Colonic mucosa (tissue), 4 donors: ENCODE measurements at regions of chr3 and their contacts with region 1.

Region 1: DNA sequence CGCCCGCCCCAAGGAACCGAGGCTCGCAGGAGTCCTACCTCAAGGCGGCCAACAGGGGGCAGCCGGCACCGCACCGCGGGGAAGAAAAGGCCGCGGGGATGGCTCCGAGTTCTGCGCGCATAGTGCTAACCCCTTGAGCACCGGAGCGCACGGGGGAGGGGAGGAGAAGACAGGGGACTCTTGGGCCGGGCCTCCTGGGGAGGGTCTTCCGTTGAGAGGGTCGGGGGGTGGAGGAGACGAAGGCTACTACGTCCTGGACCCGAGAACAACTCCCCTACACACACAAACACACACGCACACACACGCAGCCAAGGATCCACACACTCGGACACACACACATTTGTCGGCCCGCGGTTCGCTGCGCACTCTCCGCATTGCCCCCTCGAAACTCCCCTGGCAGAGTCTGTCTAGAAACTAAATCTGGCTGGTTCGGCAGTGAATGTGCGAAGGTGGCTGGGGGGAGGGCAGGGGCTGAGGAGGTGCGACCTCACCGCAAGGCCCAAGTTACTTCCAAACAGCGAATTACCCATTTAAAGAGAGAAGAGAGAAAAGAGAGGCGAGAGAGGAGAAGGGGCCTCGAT is 1.8 kb downstream of the WNT5A start:
- DNase-seq: peak; percentile 75
- H3K4me3 ChIP-seq: peak overlapping the region; percentile 57
- H3K27ac ChIP-seq: peak overlapping the region; percentile 23
- H3K4me1 ChIP-seq: peaks cover 10% of the 10 kb centered on the region
- H3K27me3 ChIP-seq: peaks cover 40% of the 10 kb centered on the region
- CTCF ChIP-seq: peak; percentile 70

Region 2: DNA sequence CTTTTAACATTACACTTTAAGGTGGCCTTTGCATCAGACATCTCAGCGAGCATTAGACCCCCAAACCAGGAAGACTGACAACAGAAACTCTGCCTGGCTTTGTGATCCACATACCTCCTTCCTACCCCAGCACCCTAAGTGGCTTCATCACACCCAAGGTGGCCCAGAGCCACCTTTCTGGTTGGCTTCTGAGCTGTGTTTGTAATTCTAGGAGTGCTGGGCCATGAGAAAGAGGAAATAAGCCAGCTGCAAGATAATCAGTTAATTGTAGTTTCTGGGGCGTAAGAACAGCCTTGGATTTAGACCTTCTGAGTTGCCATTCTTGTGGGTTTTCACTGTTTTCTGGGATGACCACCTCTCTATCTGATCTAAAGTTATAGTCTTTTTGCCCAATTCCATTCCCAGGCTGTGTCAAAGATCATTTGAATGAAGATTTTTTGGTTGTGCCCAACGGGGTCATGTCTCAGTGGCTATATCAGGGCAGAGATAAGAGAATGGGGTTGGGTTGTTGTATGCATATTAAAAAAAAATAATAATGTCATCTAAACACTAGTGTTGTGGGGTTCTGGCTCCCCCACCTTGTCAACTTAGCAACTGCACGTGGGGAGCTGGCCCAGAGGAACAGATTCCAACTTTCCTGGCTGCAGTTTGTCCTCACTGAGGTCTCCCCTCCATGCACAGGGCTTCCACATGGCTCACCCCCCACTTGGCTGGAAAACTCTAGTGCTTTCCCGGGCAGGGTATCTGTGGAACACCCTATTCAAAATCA is 236.6 kb after region 1 on chr3:
- intact Hi-C with region 1: loop called (anchors 5 kb)
- DNase-seq: peak; percentile 26
- H3K4me3 ChIP-seq: no peak overlapping the region
- H3K27ac ChIP-seq: no peak overlapping the region
- H3K4me1 ChIP-seq: no peaks in the 10 kb centered on the region
- H3K27me3 ChIP-seq: no peaks in the 10 kb centered on the region
- CTCF ChIP-seq: peak; percentile 41

Region 3: DNA sequence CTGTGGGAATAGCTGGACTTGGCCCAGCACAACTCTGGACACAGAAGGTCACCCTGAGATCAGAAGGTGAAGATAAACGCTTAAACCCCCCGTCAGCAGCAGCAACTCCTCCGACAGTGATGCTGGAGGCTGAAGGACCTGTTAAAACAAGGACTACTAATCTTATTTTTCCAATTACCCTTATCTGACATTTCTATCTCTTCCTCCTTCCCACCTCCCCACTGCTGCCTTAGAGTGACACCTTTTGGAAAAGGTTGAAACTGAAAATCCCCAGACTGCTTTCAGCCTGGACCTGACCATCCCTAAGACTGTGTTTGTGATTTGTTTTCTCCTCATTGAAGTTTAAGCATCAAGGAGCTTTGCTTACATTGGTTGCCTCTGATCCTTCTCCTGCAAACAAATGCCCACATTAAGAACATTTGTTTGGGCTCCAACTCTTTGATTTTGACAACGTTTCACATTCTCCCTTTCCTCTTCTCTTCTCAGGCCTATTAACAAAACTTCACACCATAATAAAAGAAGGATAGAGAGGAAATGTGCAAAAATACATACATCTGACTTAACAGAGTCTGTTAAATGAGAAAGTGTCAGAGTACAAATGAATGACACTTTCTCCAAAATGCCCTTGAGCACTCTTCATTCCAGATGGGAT is 412.4 kb after region 1 on chr3:
- intact Hi-C with region 1: loop called (anchors 5 kb)
- DNase-seq: peak; percentile 19
- H3K4me3 ChIP-seq: no peak overlapping the region
- H3K27ac ChIP-seq: no peak overlapping the region
- H3K4me1 ChIP-seq: no peaks in the 10 kb centered on the region
- H3K27me3 ChIP-seq: no peaks in the 10 kb centered on the region
- CTCF ChIP-seq: peak; percentile 19

Region 4: DNA sequence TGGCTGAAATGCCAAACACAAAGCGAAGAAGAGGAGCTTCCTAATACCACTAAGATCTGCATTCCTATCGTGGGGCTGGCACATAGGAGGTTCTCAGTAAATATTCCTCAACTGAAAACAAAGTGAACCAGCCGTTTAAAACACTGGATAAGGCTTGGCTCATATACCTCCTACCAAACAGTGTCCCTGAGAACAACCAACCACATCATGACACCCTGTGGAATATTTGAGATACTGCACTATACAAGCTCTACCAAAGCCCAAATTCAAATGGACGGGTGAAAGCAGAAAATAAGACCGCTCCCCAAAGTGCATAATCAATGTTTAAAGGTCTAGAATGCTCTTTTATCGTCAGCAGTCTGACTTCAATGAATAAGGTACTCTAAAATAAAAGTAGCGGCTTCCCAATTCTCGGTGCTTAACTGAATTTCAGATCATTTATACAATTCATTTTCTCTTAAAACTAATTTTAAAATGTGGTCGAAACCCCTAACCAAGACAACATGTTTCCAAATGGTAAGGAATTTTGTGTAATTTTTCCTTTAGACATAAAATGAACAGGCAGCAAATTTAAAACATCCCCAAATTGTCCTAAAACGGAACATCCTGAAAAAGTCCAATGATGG is 557.1 kb after region 1 on chr3:
- intact Hi-C with region 1: loop called (anchors 5 kb)
- DNase-seq: no peak
- H3K4me3 ChIP-seq: no peak overlapping the region
- H3K27ac ChIP-seq: no peak overlapping the region
- H3K4me1 ChIP-seq: no peaks in the 10 kb centered on the region
- H3K27me3 ChIP-seq: no peaks in the 10 kb centered on the region
- CTCF ChIP-seq: peak; percentile 38

Region 5: GRCh38 chr3:56251343-56251945 is 766.1 kb after region 1 on chr3:
- intact Hi-C with region 1: loop called (anchors 5 kb)
- DNase-seq: peak; percentile 44
- H3K4me3 ChIP-seq: no peak overlapping the region
- H3K27ac ChIP-seq: no peak overlapping the region
- H3K4me1 ChIP-seq: no peaks in the 10 kb centered on the region
- H3K27me3 ChIP-seq: no peaks in the 10 kb centered on the region
- CTCF ChIP-seq: peak; percentile 68